Common myeloid progenitor, CD34-positive (primary cell): ENCODE measurements at regions of chr14 and their contacts with region 1.

Region 1: GRCh38 chr14:65054471-65055085 is 47.7 kb downstream of the MAX start:
- DNase-seq: peak; percentile 58 to 94 (median 87)
- H3K4me3 ChIP-seq: no peak overlapping the region
- H3K27ac ChIP-seq: peak overlapping the region in 1 of 2 experiments; percentile 63
- H3K4me1 ChIP-seq: peaks cover 3 to 40% (median 25%) of the 10 kb centered on the region in 4 experiments
- H3K27me3 ChIP-seq: no peaks in the 10 kb centered on the region

Region 2: GRCh38 chr14:65042731-65043372 is 11.7 kb before region 1 on chr14:
- CTCF ChIA-PET with region 1: interaction called, 15 read pairs
- POLR2A ChIA-PET with region 1: interaction called, 11 read pairs
- DNase-seq: peak; percentile 84 to 98 (median 94)
- H3K4me3 ChIP-seq: peak overlapping the region in 3 of 7 experiments; percentile 22 to 57 (median 42)
- H3K27ac ChIP-seq: peak overlapping the region; percentile 80 to 84
- H3K4me1 ChIP-seq: peaks cover 17 to 67% (median 49%) of the 10 kb centered on the region in 4 experiments
- H3K27me3 ChIP-seq: no peaks in the 10 kb centered on the region